H1 (cell line): ENCODE measurements at regions of chr4 and their contacts with region 1.

Region 1: DNA sequence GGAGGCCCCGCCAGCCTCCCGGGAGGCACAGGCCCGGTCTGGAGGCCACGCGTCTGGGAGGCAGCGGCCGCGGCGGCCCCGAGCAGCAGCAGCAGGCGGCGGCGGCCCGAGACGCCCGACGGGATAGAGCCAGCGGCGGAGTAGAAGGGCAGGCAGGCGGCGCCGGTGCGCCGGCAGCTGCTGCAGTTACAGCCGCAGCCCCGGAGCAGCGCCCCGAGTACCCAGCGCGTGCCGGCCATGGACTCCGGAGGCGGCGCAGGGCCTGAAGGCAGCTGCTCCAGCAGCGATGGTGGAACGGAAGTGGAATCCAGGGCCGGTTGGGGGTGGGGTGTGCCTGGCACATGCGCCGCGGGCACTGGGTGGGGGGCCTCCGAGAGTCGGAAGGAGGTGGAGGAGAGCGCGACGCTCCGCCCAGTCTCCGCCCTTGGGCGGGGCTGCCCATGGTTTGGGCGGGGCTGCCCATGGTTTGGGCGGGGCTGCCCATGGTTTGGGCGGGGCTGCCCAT is at the start of gene GRSF1:
- DNase-seq: peak; percentile 87 to 92
- H3K4me3 ChIP-seq: peak within 1 kb of the TSS; percentile 90 to 97 (median 92)
- H3K27ac ChIP-seq: peak within 1 kb of the TSS; percentile 94
- H3K4me1 ChIP-seq: peaks cover 2 to 8% (median 5%) of the 10 kb centered on the region in 4 experiments; a peak in 5 of 7 replicates
- H3K27me3 ChIP-seq: no peaks in the 10 kb centered on the region
- CTCF ChIP-seq: peak in 1 of 3 experiments; percentile 9; a peak in 1 of 4 replicates
- EP300 ChIP-seq: no peak
- POLR2A ChIP-seq: peak; percentile 77 to 91; a peak in 2 of 3 replicates
- RAD21 ChIP-seq: peak; percentile 12 to 21; a peak in 2 of 4 replicates
- total RNA-seq, gene GRSF1: 105 and 112 TPM in 2 replicates

Region 2: DNA sequence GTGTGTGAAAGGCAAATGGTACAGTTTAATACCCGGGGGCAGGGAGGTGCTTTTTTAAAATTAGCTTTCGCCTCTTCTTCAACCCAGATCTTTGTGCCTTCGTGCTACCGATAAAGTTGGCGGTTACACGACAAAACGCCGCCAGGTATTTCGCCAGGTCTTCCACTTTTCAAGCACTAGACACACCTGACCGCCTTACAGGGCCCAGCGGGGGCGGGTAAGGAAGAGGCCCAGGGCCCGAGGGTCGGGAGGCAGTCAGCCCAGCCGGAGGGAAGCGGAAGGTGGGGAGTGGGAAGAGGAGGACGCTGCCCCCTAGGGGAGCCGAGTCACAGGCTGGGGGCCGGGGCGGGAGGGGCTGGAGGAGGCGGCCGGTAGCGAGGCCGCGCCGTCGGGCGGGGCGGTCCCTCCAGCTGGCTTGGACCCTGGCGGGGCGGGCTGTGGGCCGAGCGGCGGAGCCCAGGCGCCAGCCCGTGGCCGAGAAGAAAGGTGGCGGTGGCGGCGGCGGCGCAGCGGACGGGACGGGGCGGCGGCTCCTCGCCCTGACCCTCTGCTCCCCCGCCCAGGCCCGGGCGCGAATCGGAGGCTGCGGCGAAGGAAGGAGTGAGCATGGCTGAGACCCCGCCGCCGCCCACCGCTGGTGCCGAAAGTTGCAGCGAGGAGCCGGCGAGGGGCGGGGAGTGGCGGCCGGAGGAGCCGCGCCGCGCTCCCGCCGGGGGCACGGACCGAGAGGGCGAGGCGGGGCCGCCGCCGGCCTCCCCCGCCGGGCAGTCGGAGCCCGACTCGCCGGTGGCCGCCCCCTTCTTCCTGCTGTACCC is 135.1 kb before region 1 on chr4:
- CTCF ChIA-PET with region 1: no interaction called
- POLR2A ChIA-PET with region 1: interaction called, 14 read pairs
- DNase-seq: peak in 1 of 2 experiments; percentile 84
- H3K4me3 ChIP-seq: peak overlapping the region; percentile 51 to 71 (median 68)
- H3K27ac ChIP-seq: no peak overlapping the region; the same call in 1 of the 2 replicates
- H3K4me1 ChIP-seq: peaks cover 0 to 9% (median 4%) of the 10 kb centered on the region in 4 experiments; a peak in 5 of 7 replicates
- H3K27me3 ChIP-seq: no peaks in the 10 kb centered on the region; a peak in 1 of 7 replicates
- CTCF ChIP-seq: peak; percentile 29 to 46 (median 37)
- EP300 ChIP-seq: no peak
- POLR2A ChIP-seq: peak in 1 of 2 experiments; percentile 64; a peak in 2 of 3 replicates
- RAD21 ChIP-seq: peak in 1 of 2 experiments; percentile 25; a peak in 2 of 4 replicates

Region 3: DNA sequence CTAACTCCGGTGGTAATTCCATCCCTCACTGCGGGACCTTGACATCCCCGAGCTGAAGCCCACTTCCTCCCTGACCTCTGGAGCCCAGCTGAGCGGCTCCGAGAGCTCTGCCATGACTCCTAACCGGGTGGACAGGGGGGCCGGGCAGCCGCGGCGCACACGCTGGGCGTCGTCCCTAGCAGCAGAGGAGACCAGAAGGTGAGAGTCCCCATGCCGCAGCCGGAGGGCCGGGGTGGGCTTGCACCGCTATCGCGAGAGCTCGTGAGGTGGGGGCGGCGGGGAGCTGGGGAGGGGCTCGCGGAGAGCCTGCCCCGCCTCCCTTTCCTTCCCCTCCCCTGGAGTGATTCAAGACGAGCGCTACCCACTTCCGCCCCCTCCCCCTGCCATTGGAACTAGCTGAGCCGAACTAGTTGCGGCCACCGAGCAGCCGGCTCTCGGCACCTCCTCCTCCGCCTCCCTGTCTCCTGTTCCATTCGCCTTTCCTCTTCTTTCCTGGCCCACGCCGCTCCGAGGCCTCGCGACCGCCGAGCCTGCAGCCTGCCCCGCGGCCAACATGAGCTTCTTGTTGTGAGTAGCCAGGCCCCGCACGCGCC is 62.4 kb after region 1 on chr4 and contains the start of gene MOB1B:
- CTCF ChIA-PET with region 1: interaction called, 3 read pairs
- POLR2A ChIA-PET with region 1: interaction called, 11 read pairs
- DNase-seq: peak; percentile 88 to 91
- H3K4me3 ChIP-seq: peak within 1 kb of the TSS; percentile 83 to 94 (median 93)
- H3K27ac ChIP-seq: peak within 1 kb of the TSS; percentile 80; the same call in 1 of the 2 replicates
- H3K4me1 ChIP-seq: peaks cover 0 to 7% (median 2%) of the 10 kb centered on the region in 4 experiments; a peak in 3 of 7 replicates
- H3K27me3 ChIP-seq: no peaks in the 10 kb centered on the region; a peak in 1 of 7 replicates
- CTCF ChIP-seq: peak; percentile 29 to 65 (median 56); a peak in 3 of 4 replicates
- EP300 ChIP-seq: no peak
- POLR2A ChIP-seq: peak; percentile 67 to 87
- RAD21 ChIP-seq: peak; percentile 47 to 48
- total RNA-seq, gene MOB1B: 31.1 and 33.5 TPM in 2 replicates

Region 4: GRCh38 chr4:70993181-70994068 is 153.8 kb after region 1 on chr4 and contains the start of gene DCK:
- CTCF ChIA-PET with region 1: no interaction called
- POLR2A ChIA-PET with region 1: interaction called, 17 read pairs
- DNase-seq: peak; percentile 84 to 91
- H3K4me3 ChIP-seq: peak within 1 kb of the TSS; percentile 87 to 95 (median 89)
- H3K27ac ChIP-seq: peak within 1 kb of the TSS; percentile 80
- H3K4me1 ChIP-seq: peaks cover 2 to 9% (median 5%) of the 10 kb centered on the region in 4 experiments; a peak in 4 of 7 replicates
- H3K27me3 ChIP-seq: no peaks in the 10 kb centered on the region
- CTCF ChIP-seq: peak in 1 of 3 experiments; percentile 3; a peak in 1 of 4 replicates
- EP300 ChIP-seq: no peak
- POLR2A ChIP-seq: peak; percentile 82 to 88
- RAD21 ChIP-seq: peak in 1 of 2 experiments; percentile 12; a peak in 1 of 4 replicates
- total RNA-seq, gene DCK: 15.7 and 18.1 TPM in 2 replicates